Endothelial cell of umbilical vein (primary cell): ENCODE measurements at regions of chr6 and their contacts with region 1.

Region 1: DNA sequence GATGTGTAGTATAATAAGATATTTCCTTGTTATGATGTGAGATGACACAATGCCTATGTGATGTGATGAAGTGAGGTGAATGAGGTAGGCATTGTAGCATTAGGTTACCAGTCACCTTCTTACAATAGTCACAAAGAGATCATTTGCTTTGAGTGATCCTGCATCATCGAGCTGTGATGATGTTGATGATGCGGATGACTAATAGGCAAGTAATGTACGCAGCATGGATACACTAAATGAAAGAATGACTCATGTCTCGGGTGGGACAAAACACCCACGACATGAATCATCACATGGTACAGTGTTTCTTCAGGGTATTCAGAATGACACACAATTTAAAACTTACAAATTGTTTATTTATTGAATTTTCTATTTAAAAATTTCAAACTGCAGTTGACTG is 806.3 kb upstream of the GJE1 start:
- DNase-seq: peak; percentile 94
- H3K4me3 ChIP-seq: peak overlapping the region in 2 of 3 experiments; percentile 3 to 34
- H3K27ac ChIP-seq: peak overlapping the region; percentile 82
- H3K4me1 ChIP-seq: peaks cover 4% of the 10 kb centered on the region
- H3K27me3 ChIP-seq: no peaks in the 10 kb centered on the region
- CTCF ChIP-seq: no peak
- POLR2A ChIP-seq: no peak

Region 2: DNA sequence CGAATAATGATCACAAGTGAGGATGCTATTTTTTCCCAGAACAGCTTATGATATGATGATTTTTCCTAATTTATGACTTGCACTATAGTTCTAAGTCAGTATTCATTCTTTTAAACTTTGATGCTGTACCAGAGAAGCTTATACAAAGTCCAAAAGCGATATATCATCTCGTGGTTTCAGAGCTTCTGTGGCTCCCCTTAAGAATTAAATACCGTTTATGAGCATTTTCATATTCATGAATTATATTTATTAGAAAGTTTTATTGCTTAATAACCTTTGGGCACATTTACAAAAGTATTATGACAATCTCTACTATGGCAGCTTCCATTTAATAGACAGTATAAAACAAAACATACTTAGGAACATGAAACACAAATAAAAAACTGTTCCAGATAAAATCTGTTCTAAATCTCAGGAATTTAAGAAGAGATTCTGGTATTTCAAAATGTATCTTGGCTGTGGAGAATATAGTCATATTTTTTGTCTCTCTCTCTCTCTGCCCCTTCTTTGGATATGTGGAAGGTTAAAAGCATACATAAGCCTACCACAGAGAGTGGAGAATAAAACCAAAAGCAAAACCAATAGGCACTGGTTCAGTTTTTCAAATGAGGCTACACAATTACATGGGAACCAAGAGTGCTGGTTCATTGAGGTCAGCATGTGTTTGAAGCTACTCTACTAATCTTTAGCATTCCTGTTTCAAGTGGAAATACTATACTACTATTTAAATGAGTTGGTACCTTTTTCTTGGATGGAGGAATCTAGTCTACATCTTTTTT is 78.2 kb before region 1 on chr6:
- CTCF ChIA-PET with region 1: no interaction called
- POLR2A ChIA-PET with region 1: no interaction called
- dilution Hi-C with region 1: no loop called
- intact Hi-C with region 1: no loop called
- DNase-seq: no peak
- H3K4me3 ChIP-seq: no peak overlapping the region
- H3K27ac ChIP-seq: no peak overlapping the region
- H3K4me1 ChIP-seq: no peaks in the 10 kb centered on the region
- H3K27me3 ChIP-seq: no peaks in the 10 kb centered on the region
- CTCF ChIP-seq: no peak
- POLR2A ChIP-seq: no peak

Region 3: GRCh38 chr6:141451508-141452353 is 125.3 kb after region 1 on chr6:
- CTCF ChIA-PET with region 1: no interaction called
- POLR2A ChIA-PET with region 1: no interaction called
- dilution Hi-C with region 1: no loop called
- intact Hi-C with region 1: loop called (anchors 1 kb)
- DNase-seq: peak; percentile 50
- H3K4me3 ChIP-seq: no peak overlapping the region
- H3K27ac ChIP-seq: peak overlapping the region; percentile 47
- H3K4me1 ChIP-seq: peaks cover 20% of the 10 kb centered on the region
- H3K27me3 ChIP-seq: no peaks in the 10 kb centered on the region
- CTCF ChIP-seq: no peak
- POLR2A ChIP-seq: no peak

Region 4: DNA sequence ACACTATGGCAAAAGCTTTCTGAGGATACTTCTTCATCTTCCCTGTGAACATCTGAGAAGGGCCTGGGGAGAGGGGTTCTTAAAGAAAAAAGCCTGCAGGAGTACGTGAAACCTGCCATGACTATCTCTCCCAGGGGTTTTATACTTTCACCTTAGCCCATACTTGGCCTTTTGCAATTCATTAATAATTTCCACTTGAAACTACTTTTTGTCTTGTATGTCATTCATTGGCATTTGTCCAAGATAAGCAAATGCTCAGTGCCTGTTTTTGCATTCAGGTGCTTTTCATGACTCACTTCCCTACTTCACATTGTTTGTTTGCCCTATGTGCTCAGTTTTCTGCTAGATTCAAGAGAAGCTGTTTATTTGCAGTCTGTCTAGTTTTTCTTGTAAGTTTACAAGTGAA is 226.1 kb after region 1 on chr6:
- CTCF ChIA-PET with region 1: no interaction called
- POLR2A ChIA-PET with region 1: no interaction called
- dilution Hi-C with region 1: no loop called
- intact Hi-C with region 1: loop called (anchors 1 kb)
- DNase-seq: peak; percentile 98
- H3K4me3 ChIP-seq: peak overlapping the region in 1 of 3 experiments; percentile 30
- H3K27ac ChIP-seq: peak overlapping the region; percentile 80
- H3K4me1 ChIP-seq: peaks cover 17% of the 10 kb centered on the region
- H3K27me3 ChIP-seq: no peaks in the 10 kb centered on the region
- CTCF ChIP-seq: no peak
- POLR2A ChIP-seq: peak; percentile 60